ENCODE measurements at regions of chrX and their contacts with region 1.

Region 1: DNA sequence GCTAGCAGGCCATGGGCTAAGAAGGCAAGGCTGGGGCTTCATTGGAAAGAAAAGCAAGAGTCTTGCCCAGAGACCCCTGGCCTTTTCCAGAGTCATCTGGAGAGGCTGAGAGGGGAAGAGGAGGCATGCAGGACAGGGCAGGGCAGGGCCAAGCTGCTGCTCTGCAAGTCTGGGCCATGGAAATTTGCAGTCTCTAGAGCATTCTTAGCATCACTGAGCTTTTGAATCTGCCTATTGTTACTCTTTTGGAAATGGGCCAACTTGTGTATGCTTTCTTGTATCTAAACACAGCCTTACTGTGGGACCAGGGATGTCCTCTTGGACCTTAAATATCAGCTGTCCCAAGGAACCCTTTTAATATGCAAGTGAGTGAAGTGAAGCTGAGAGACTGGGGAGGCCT is 560.5 kb downstream of the MID1IP1 start:
- DNase-seq: no peak
- ATAC-seq: no peak
- H3K4me3 ChIP-seq: no peak overlapping the region
- H3K4me3 Mint-ChIP-seq: no peak overlapping the region
- H3K27ac ChIP-seq: no peak overlapping the region
- H3K27ac Mint-ChIP-seq: no peak overlapping the region
- H3K4me1 ChIP-seq: no peaks in the 10 kb centered on the region
- H3K4me1 Mint-ChIP-seq: peaks cover 8% of the 10 kb centered on the region
- H3K27me3 ChIP-seq: no peaks in the 10 kb centered on the region
- H3K27me3 Mint-ChIP-seq: no peaks in the 10 kb centered on the region
- CTCF ChIP-seq: no peak

Region 2: GRCh38 chrX:39336671-39337311 is 24.9 kb before region 1 on chrX:
- CTCF ChIA-PET with region 1: no interaction called
- POLR2A ChIA-PET with region 1: no interaction called
- intact Hi-C with region 1: loop called in 1 of 2 experiments (anchors 1 kb)
- DNase-seq: peak in 3 of 9 experiments; percentile 2 to 25 (median 15)
- ATAC-seq: no peak
- H3K4me3 ChIP-seq: no peak overlapping the region
- H3K4me3 Mint-ChIP-seq: peak overlapping the region; percentile 56
- H3K27ac ChIP-seq: no peak overlapping the region
- H3K27ac Mint-ChIP-seq: peak overlapping the region; percentile 85
- H3K4me1 ChIP-seq: peaks cover 26% of the 10 kb centered on the region
- H3K4me1 Mint-ChIP-seq: peaks cover 36% of the 10 kb centered on the region
- H3K27me3 ChIP-seq: no peaks in the 10 kb centered on the region
- H3K27me3 Mint-ChIP-seq: no peaks in the 10 kb centered on the region
- CTCF ChIP-seq: no peak